CD4-positive, alpha-beta memory T cell (primary cell): ENCODE measurements at regions of chr9 and their contacts with region 1.

Region 1: GRCh38 chr9:136118320-136119060 is at the start of gene TMEM250:
- DNase-seq: peak; percentile 94 to 97 (median 97)
- H3K4me3 ChIP-seq: peak within 1 kb of the TSS; percentile 29 to 75
- H3K4me3 Mint-ChIP-seq: peak within 1 kb of the TSS; percentile 79 to 87 (median 84)
- H3K27ac ChIP-seq: peak within 1 kb of the TSS; percentile 87
- H3K27ac Mint-ChIP-seq: peak within 1 kb of the TSS; percentile 75 to 92 (median 82)
- H3K4me1 ChIP-seq: peaks cover 38% of the 10 kb centered on the region
- H3K4me1 Mint-ChIP-seq: peaks cover 3 to 34% (median 11%) of the 10 kb centered on the region in 4 donors
- H3K27me3 ChIP-seq: no peaks in the 10 kb centered on the region
- H3K27me3 Mint-ChIP-seq: no peaks in the 10 kb centered on the region
- total RNA-seq, gene TMEM250: 52.1 to 55.8 TPM

Region 2: GRCh38 chr9:135864447-135865049 is 253.9 kb before region 1 on chr9:
- CTCF ChIA-PET with region 1: interaction called, 13 read pairs
- POLR2A ChIA-PET with region 1: no interaction called
- intact Hi-C with region 1: no loop called
- DNase-seq: peak; percentile 51 to 63 (median 52)
- H3K4me3 ChIP-seq: no peak overlapping the region
- H3K4me3 Mint-ChIP-seq: no peak overlapping the region
- H3K27ac ChIP-seq: no peak overlapping the region
- H3K27ac Mint-ChIP-seq: peak overlapping the region in 3 of 7 donors; percentile 4 to 44 (median 42)
- H3K4me1 ChIP-seq: peaks cover 7% of the 10 kb centered on the region
- H3K4me1 Mint-ChIP-seq: peaks cover 12 to 26% (median 17%) of the 10 kb centered on the region in 4 donors
- H3K27me3 ChIP-seq: no peaks in the 10 kb centered on the region
- H3K27me3 Mint-ChIP-seq: no peaks in the 10 kb centered on the region

Region 3: GRCh38 chr9:135961277-135961705 is 157.2 kb before region 1 on chr9 and contains the start of gene UBAC1:
- CTCF ChIA-PET with region 1: interaction called, 64 read pairs
- POLR2A ChIA-PET with region 1: interaction called, 3 read pairs
- intact Hi-C with region 1: loop called (anchors 1 kb)
- DNase-seq: peak; percentile 92 to 96 (median 95)
- H3K4me3 ChIP-seq: peak within 1 kb of the TSS; percentile 64 to 69
- H3K4me3 Mint-ChIP-seq: peak within 1 kb of the TSS; percentile 83 to 91 (median 86)
- H3K27ac ChIP-seq: peak within 1 kb of the TSS; percentile 65
- H3K27ac Mint-ChIP-seq: peak within 1 kb of the TSS; percentile 82 to 93 (median 92)
- H3K4me1 ChIP-seq: peaks cover 21% of the 10 kb centered on the region
- H3K4me1 Mint-ChIP-seq: peaks cover 10 to 42% (median 21%) of the 10 kb centered on the region in 4 donors
- H3K27me3 ChIP-seq: no peaks in the 10 kb centered on the region
- H3K27me3 Mint-ChIP-seq: peaks cover 2 to 4% of the 10 kb centered on the region in 2 donors
- total RNA-seq, gene UBAC1: 28.4 to 32.8 TPM

Region 4: DNA sequence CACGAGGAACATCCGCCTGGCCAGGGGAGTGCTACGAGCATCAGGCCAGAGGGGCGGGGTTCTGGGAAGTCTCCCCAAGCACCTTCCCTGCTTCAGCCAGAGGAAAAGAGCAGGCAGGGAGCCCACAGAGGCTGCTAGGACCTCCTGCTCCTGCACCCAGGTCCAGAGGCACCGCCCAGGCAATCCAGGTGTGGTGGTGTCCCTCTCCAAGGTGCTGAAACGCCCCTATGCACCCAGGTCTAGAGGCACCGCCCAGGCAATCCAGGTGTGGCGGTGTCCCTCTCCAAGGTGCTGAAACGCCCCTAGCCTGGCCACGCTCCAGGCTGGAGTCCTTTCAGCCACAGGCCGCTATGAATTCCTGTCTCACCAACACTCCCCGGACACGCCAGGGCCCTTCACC is 146.6 kb before region 1 on chr9:
- CTCF ChIA-PET with region 1: interaction called, 64 read pairs
- POLR2A ChIA-PET with region 1: interaction called, 8 read pairs
- intact Hi-C with region 1: loop called (anchors 1 kb)
- DNase-seq: peak; percentile 46 to 69 (median 52)
- H3K4me3 ChIP-seq: no peak overlapping the region
- H3K4me3 Mint-ChIP-seq: no peak overlapping the region
- H3K27ac ChIP-seq: no peak overlapping the region
- H3K27ac Mint-ChIP-seq: peak overlapping the region in 1 of 7 donors; percentile 28
- H3K4me1 ChIP-seq: peaks cover 10% of the 10 kb centered on the region
- H3K4me1 Mint-ChIP-seq: peaks cover 6 to 9% (median 7%) of the 10 kb centered on the region in 4 donors
- H3K27me3 ChIP-seq: no peaks in the 10 kb centered on the region
- H3K27me3 Mint-ChIP-seq: peaks cover 4 to 7% of the 10 kb centered on the region in 2 donors

Region 5: DNA sequence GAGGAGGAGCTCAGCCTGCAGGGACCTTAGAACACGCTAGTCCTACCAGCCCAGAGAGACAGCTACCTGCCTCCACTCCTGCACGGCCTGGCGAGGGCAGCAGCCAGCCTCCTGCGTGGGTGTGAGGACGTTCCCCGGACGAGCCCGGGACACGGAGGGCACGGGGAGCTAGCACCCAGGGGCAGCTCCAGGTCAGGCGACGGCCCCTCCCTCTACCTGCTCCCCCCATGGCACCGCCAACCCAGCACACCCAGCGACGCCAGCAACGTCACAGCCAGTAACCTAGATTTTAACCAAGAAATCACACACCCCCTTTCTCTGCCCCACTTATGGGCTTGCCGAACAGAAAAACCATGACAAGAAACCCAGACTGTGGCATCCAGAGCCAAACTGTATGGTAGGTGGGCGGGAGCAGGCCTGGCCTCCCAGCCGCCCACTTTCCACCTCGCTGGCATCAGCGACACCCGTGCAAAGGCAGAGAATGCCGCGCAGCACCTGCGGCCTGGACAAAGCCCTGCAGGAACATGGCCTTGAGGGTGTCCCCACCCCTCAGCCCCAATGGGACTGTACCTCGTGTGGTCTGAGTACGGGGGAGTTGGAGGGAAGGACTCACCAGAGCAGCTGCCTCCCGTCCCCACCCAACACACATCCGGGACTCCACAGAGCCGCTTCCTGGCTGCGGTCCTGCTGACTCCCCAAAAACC is 71.3 kb before region 1 on chr9:
- CTCF ChIA-PET with region 1: no interaction called
- POLR2A ChIA-PET with region 1: no interaction called
- intact Hi-C with region 1: no loop called
- DNase-seq: peak in 1 of 5 donors; percentile 14
- H3K4me3 ChIP-seq: no peak overlapping the region
- H3K4me3 Mint-ChIP-seq: no peak overlapping the region
- H3K27ac ChIP-seq: no peak overlapping the region
- H3K27ac Mint-ChIP-seq: peak overlapping the region in 3 of 7 donors; percentile 29 to 77 (median 72)
- H3K4me1 ChIP-seq: peaks cover 5% of the 10 kb centered on the region
- H3K4me1 Mint-ChIP-seq: peaks cover 4 to 11% (median 7%) of the 10 kb centered on the region in 4 donors
- H3K27me3 ChIP-seq: no peaks in the 10 kb centered on the region
- H3K27me3 Mint-ChIP-seq: peaks cover 2 to 4% of the 10 kb centered on the region in 2 donors

Region 6: GRCh38 chr9:136093995-136094881 is 24.3 kb before region 1 on chr9:
- CTCF ChIA-PET with region 1: interaction called, 75 read pairs
- POLR2A ChIA-PET with region 1: interaction called, 155 read pairs
- intact Hi-C with region 1: loop called (anchors 1 kb)
- DNase-seq: peak; percentile 42 to 72 (median 46)
- H3K4me3 ChIP-seq: peak overlapping the region in 1 of 2 donors; percentile 45
- H3K4me3 Mint-ChIP-seq: peak overlapping the region; percentile 65 to 88 (median 74)
- H3K27ac ChIP-seq: peak overlapping the region; percentile 43
- H3K27ac Mint-ChIP-seq: peak overlapping the region in 5 of 7 donors; percentile 22 to 85 (median 70)
- H3K4me1 ChIP-seq: peaks cover 45% of the 10 kb centered on the region
- H3K4me1 Mint-ChIP-seq: peaks cover 6 to 43% (median 24%) of the 10 kb centered on the region in 4 donors
- H3K27me3 ChIP-seq: no peaks in the 10 kb centered on the region
- H3K27me3 Mint-ChIP-seq: no peaks in the 10 kb centered on the region

Region 7: GRCh38 chr9:136206602-136207275 is 88.2 kb after region 1 on chr9:
- CTCF ChIA-PET with region 1: no interaction called
- POLR2A ChIA-PET with region 1: no interaction called
- intact Hi-C with region 1: no loop called
- DNase-seq: no peak
- H3K4me3 ChIP-seq: no peak overlapping the region
- H3K4me3 Mint-ChIP-seq: no peak overlapping the region
- H3K27ac ChIP-seq: no peak overlapping the region
- H3K27ac Mint-ChIP-seq: no peak overlapping the region
- H3K4me1 ChIP-seq: no peaks in the 10 kb centered on the region
- H3K4me1 Mint-ChIP-seq: peaks cover 0 to 3% (median 0%) of the 10 kb centered on the region in 4 donors
- H3K27me3 ChIP-seq: peaks cover 4% of the 10 kb centered on the region
- H3K27me3 Mint-ChIP-seq: peaks cover 5 to 8% of the 10 kb centered on the region in 2 donors

Region 8: DNA sequence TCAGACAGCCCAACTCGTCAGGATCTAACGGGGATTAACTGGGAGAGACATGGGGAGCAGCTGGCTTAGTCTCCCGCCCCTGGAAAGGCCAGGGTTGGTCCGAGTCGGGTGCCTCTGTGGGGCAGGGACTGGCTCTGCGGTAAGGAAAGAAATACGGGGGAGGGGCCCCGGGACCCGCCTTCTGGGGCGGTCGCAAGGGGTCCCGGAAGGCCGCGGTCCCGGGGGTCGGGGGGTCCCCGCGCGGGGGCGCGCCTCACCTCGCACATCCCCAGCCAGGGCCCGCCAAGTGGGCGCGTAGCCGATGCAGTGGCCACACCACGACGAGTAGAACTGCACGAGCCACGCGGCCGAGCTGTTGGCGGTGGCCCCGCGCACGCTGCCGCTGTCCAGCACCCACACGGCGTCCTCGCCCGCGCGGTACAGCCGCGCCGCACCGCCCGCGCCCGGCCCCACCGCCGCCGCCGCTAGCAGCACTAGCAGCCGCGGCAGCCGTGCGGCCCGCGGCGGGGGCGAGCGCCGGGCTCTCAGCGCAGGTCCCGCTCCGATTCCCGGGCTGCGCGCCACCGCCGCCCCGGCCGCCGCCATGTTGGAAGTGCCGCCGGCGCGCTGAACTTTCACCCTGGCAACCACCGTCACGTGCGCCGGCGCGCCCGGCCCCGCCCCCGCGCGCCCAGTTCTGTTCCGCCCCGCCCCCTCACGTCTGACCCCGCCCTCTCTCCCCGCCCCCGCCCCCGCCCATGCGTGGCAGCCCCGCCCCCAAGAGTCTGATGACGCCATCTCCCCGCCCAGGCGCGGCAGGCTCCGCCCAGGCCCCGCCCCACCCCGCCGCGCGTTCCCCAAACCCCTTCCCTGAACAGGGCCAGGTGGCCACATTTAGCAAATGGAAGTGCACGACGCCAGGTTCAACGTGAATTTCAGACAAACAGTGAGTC is 127.0 kb after region 1 on chr9 and contains the start of gene QSOX2:
- CTCF ChIA-PET with region 1: no interaction called
- POLR2A ChIA-PET with region 1: no interaction called
- intact Hi-C with region 1: loop called (anchors 10 kb)
- DNase-seq: peak; percentile 78 to 89 (median 84)
- H3K4me3 ChIP-seq: peak within 1 kb of the TSS; percentile 50 to 57
- H3K4me3 Mint-ChIP-seq: peak within 1 kb of the TSS; percentile 91 to 97 (median 94)
- H3K27ac ChIP-seq: peak within 1 kb of the TSS; percentile 32
- H3K27ac Mint-ChIP-seq: peak within 1 kb of the TSS; percentile 85 to 94 (median 92)
- H3K4me1 ChIP-seq: peaks cover 35% of the 10 kb centered on the region
- H3K4me1 Mint-ChIP-seq: peaks cover 25 to 40% (median 32%) of the 10 kb centered on the region in 4 donors
- H3K27me3 ChIP-seq: no peaks in the 10 kb centered on the region
- H3K27me3 Mint-ChIP-seq: no peaks in the 10 kb centered on the region
- total RNA-seq, gene QSOX2: 14.8 to 15.0 TPM